Activated naive CD4-positive, alpha-beta T cell treated with anti-CD3 and anti-CD28 coated beads for 36 hours (primary cell): ENCODE measurements at regions of chr5 and their contacts with region 1.

Region 1: DNA sequence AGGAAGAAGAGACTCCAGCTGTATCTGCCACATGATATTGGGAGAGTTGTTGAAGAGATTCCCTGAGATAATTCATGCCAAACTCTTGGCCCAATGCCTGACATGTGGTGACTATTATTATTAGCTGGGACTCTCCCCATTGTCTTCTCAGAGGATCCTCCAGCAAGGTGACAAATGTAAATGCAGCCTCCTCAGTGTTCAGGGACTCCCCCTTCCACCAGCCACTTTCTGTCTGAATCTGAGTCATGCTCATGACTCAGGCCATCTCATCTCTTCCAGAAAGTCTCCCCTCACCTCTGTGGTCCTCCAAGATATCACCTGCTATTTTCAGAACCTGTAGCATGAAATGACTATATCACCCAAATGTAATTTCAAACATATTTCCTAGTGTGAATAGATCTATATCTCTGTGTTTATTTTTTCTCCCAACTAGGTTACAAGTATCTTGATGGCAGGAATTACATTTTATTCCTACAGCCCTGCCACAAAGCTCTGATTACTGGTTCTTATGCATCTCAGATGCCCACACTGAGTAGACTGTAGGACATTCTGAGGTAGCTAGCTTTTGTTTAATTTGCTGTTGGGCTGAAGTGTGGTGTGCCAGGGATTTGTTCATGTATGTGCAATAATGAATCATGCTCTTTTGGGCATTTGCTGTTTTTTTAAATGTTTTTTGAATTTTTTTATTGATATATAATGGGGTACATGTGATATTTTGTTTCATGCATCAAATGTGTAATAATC is 126.6 kb upstream of the IL12B start:
- DNase-seq: peak; percentile 88
- H3K4me3 Mint-ChIP-seq: no peak overlapping the region
- H3K27ac Mint-ChIP-seq: no peak overlapping the region
- H3K4me1 Mint-ChIP-seq: peaks cover 50% of the 10 kb centered on the region
- H3K27me3 Mint-ChIP-seq: peaks cover 14% of the 10 kb centered on the region

Region 2: DNA sequence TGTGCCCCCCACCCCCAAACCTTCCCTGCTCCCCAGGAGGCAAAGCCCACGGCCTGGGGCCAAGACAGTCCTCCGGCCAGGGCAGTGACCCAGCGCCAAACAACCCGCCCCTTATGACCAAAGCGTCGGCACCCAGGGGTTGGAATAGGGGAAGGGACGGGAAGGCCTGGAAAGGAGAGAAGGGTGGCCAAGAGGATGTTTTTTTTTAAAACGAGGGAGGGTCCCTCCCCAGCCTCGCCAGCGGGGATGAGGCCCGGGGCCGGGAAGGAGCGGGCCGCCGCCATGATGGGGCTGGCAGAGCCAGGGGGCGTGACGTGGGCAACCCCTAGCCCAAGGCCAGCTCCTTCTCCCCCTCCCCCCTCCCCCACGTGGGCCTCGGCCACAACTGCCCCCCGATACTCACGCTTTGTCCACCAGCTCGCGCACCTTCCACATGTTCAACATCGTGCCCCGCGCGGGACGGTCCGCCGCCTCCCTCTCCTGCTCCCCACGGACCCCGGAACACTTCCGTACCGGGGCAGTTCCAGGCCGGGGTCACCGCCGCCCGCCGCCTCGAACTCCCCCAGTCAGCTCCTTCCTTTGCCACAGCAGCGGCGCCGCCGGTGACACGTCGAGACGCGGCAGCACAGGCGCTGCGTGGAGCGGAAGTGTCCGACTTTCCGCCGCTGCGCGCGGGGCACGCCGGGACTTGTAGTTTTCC is 1598.2 kb before region 1 on chr5 and contains the start of gene CLINT1:
- CTCF ChIA-PET with region 1: no interaction called
- intact Hi-C with region 1: loop called (anchors 5 kb)
- DNase-seq: peak; percentile 90
- H3K4me3 Mint-ChIP-seq: peak within 1 kb of the TSS; percentile 86
- H3K27ac Mint-ChIP-seq: peak within 1 kb of the TSS; percentile 87
- H3K4me1 Mint-ChIP-seq: peaks cover 70% of the 10 kb centered on the region
- H3K27me3 Mint-ChIP-seq: no peaks in the 10 kb centered on the region
- total RNA-seq, gene CLINT1: 31.0 to 32.7 TPM

Region 3: DNA sequence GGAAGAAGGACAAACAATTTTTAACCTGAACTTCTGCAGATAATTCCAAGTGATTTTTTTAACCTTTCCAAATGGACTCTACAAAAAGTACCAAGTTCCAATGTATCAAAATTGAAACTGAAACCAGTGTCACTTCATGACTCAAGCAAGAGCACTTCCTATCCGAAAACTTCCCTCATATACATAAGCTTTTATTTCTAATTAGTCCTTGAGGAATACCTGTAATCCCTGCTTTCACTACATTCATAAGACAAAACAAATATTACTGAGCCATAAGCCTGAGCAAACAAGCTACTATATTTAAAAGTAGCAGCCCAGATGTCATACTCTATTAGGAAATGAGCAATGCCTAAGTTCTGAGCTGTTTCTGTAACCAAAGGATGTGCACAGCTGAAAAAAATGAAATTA is 581.6 kb before region 1 on chr5:
- CTCF ChIA-PET with region 1: no interaction called
- intact Hi-C with region 1: loop called (anchors 1 kb)
- DNase-seq: no peak
- H3K4me3 Mint-ChIP-seq: no peak overlapping the region
- H3K27ac Mint-ChIP-seq: no peak overlapping the region
- H3K4me1 Mint-ChIP-seq: peaks cover 29% of the 10 kb centered on the region
- H3K27me3 Mint-ChIP-seq: no peaks in the 10 kb centered on the region

Region 4: GRCh38 chr5:159133041-159133741 is 323.7 kb before region 1 on chr5:
- CTCF ChIA-PET with region 1: no interaction called
- intact Hi-C with region 1: no loop called
- DNase-seq: no peak
- H3K4me3 Mint-ChIP-seq: no peak overlapping the region
- H3K27ac Mint-ChIP-seq: no peak overlapping the region
- H3K4me1 Mint-ChIP-seq: no peaks in the 10 kb centered on the region
- H3K27me3 Mint-ChIP-seq: peaks cover 3% of the 10 kb centered on the region

Region 5: GRCh38 chr5:159209438-159210305 is 247.2 kb before region 1 on chr5 and contains the start of gene RNF145:
- CTCF ChIA-PET with region 1: interaction called, 3 read pairs
- intact Hi-C with region 1: loop called (anchors 1 kb)
- DNase-seq: peak; percentile 91
- H3K4me3 Mint-ChIP-seq: peak within 1 kb of the TSS; percentile 97
- H3K27ac Mint-ChIP-seq: peak within 1 kb of the TSS; percentile 99
- H3K4me1 Mint-ChIP-seq: peaks cover 36% of the 10 kb centered on the region
- H3K27me3 Mint-ChIP-seq: no peaks in the 10 kb centered on the region
- total RNA-seq, gene RNF145: 70.0 to 75.3 TPM

Region 6: GRCh38 chr5:159427180-159428012 is 29.5 kb before region 1 on chr5:
- CTCF ChIA-PET with region 1: no interaction called
- intact Hi-C with region 1: loop called (anchors 1 kb)
- DNase-seq: peak; percentile 10
- H3K4me3 Mint-ChIP-seq: no peak overlapping the region
- H3K27ac Mint-ChIP-seq: no peak overlapping the region
- H3K4me1 Mint-ChIP-seq: peaks cover 20% of the 10 kb centered on the region
- H3K27me3 Mint-ChIP-seq: no peaks in the 10 kb centered on the region

Region 7: DNA sequence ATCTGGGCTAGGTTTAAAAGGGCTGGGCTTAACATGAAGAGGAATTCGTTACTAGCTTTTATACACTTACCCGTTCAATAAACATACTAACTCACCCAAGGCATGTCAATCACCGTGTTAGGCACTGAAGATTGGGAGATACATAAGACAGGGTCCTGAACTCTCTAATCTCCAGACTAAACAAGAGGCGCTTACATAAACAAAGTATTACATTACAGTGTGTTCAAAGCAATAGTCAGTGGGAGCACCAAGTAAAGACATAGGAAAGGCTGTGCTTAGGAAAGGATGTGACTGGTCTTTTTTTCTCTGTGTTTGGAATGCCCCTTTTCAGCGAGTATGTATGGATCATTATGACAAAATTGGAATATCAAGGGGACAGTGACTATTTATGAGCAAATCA is 255.8 kb after region 1 on chr5:
- CTCF ChIA-PET with region 1: no interaction called
- intact Hi-C with region 1: no loop called
- DNase-seq: no peak
- H3K4me3 Mint-ChIP-seq: no peak overlapping the region
- H3K27ac Mint-ChIP-seq: no peak overlapping the region
- H3K4me1 Mint-ChIP-seq: no peaks in the 10 kb centered on the region
- H3K27me3 Mint-ChIP-seq: peaks cover 11% of the 10 kb centered on the region

Region 8: DNA sequence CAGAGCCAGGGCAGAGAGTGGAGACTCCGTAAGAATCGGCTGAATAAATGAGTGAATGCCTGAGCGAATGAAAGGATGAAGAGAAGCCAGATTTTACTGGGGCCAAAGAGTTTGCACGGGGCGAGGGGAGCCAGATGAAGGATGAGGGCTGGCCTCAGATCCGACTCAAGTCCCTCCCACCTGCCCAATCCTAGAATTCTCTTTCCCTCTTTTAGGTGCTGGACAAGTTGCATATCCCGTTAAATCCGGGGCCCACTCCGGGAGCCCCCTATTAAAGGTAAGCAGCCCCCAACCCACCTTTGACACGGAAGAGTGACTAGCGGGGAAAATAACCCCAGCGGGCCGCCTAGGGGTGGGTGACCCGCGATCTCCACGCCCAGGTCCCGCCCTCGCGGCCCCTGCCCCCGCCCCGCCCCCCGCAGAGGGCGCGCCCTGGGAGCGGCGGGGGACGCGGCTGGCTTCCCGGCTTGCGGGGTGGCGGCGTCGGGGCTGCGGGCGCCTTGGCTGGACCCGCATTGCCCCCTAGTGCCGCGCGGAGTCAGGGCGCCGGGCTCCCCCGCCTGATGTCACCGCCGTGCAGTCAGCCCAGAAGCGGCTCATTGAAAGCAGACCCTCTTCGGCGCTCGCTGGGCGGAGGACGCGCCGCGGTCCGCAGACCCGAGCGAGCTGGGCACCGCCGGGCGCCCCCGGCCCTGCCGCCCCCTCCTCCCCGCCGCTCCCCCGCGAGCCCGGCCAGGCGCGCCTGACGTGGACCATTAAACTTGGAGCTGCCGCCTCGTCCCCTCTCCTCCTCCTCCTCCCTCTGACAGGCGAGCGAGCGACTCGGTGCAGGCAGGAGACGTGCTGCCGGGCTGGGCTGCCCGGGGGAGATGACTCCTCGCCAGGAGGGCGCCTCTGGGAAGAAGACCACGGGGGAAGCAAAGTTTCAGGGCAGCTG is 459.3 kb after region 1 on chr5 and contains the start of gene ADRA1B:
- CTCF ChIA-PET with region 1: no interaction called
- intact Hi-C with region 1: loop called (anchors 5 kb)
- DNase-seq: peak; percentile 66
- H3K4me3 Mint-ChIP-seq: peak within 1 kb of the TSS; percentile 36
- H3K27ac Mint-ChIP-seq: no peak within 1 kb of the TSS
- H3K4me1 Mint-ChIP-seq: peaks cover 6% of the 10 kb centered on the region
- H3K27me3 Mint-ChIP-seq: peaks cover 44% of the 10 kb centered on the region
- total RNA-seq, gene ADRA1B: not detected